ENCODE measurements at regions of chr22 and their contacts with region 1.

Region 1: GRCh38 chr22:46006379-46007002 is 29.5 kb upstream of the WNT7B start:
- DNase-seq: peak; percentile 60
- ATAC-seq: peak; percentile 74
- H3K4me3 ChIP-seq: peak overlapping the region; percentile 46 to 63
- H3K27ac ChIP-seq: peak overlapping the region; percentile 98
- H3K4me1 ChIP-seq: peaks cover 25 to 46% of the 10 kb centered on the region in 2 experiments
- H3K27me3 ChIP-seq: no peaks in the 10 kb centered on the region
- CTCF ChIP-seq: peak in 2 of 3 experiments; percentile 82 to 94; a peak in 4 of 6 replicates
- POLR2A ChIP-seq: no peak
- RAD21 ChIP-seq: no peak

Region 2: DNA sequence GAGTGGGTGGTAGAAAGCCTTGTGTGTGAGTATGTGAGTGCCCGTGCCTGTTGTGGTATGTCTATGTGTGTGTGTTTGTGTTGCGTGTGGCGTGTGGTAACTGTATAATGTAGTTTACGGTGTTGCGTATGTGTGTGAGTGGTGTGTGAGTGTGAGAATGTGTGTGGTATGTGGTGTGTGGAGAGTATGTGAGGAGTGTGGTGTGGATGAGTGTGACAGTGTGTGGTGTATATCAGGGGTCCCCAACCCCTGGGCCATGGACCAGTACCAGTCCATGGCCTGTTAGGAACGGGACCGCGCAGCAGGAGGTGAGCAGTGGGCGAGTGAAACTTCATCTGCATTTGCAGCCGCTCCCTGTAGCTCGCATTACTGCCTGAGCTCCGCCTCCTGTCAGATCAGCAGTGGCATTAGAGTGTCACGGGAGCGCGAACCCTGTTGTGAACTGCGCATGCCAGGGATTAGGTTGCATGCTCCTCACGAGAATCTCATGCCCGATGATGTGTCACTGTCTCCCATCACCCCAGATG is 716.0 kb before region 1 on chr22:
- CTCF ChIA-PET with region 1: no interaction called
- POLR2A ChIA-PET with region 1: no interaction called
- RAD21 ChIA-PET with region 1: no interaction called
- intact Hi-C with region 1: no loop called
- DNase-seq: peak; percentile 64
- ATAC-seq: peak; percentile 96
- H3K4me3 ChIP-seq: peak overlapping the region; percentile 8 to 29; a peak in 1 of 4 replicates
- H3K27ac ChIP-seq: peak overlapping the region; percentile 1; the same call in 1 of the 2 replicates
- H3K4me1 ChIP-seq: peaks cover 9 to 22% of the 10 kb centered on the region in 2 experiments; a peak in 3 of 4 replicates
- H3K27me3 ChIP-seq: no peaks in the 10 kb centered on the region
- CTCF ChIP-seq: no peak
- POLR2A ChIP-seq: no peak
- RAD21 ChIP-seq: no peak

Region 3: GRCh38 chr22:45804986-45805325 is 201.5 kb before region 1 on chr22:
- CTCF ChIA-PET with region 1: no interaction called
- POLR2A ChIA-PET with region 1: no interaction called
- RAD21 ChIA-PET with region 1: no interaction called
- intact Hi-C with region 1: no loop called
- DNase-seq: peak; percentile 82
- ATAC-seq: peak; percentile 95
- H3K4me3 ChIP-seq: peak overlapping the region in 1 of 2 experiments; percentile 24; a peak in 1 of 4 replicates
- H3K27ac ChIP-seq: peak overlapping the region; percentile 27; the same call in 1 of the 2 replicates
- H3K4me1 ChIP-seq: peaks cover 17 to 24% of the 10 kb centered on the region in 2 experiments
- H3K27me3 ChIP-seq: no peaks in the 10 kb centered on the region
- CTCF ChIP-seq: no peak
- POLR2A ChIP-seq: no peak
- RAD21 ChIP-seq: peak; percentile 34

Region 4: DNA sequence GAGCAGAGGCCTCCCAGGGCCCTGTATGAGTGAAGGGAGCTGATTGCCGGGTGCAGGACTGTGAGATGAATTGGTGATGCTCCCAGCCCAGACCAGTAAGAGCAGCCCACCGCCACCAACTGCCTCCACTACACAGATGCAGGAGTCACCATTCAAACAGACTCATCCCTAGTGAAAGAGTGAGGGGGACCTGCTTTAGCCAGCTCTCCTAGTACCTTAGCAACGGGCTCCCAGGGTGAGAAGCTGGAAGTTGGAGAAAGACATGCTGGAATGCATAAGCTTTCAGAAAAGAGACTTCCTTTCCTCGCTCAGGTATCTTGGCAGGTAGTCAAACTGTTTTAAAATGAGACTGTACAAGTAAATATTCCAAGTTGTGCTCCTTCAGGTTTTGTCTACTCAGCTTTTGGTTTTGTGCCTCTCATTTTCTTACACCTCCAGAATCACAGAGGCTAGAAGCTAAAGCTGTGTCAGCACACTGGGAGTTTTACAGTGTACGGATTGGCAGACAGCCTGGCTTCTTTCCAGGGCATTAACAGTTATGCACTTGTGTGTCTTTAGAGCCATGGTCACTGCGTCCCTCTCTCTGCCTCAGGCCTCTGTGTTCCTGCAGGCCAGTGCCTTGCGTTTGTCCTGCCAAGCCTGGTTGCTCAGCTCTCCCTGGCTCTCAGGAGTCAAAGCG is 188.6 kb before region 1 on chr22:
- CTCF ChIA-PET with region 1: no interaction called
- POLR2A ChIA-PET with region 1: no interaction called
- RAD21 ChIA-PET with region 1: no interaction called
- intact Hi-C with region 1: no loop called
- DNase-seq: no peak
- ATAC-seq: no peak
- H3K4me3 ChIP-seq: no peak overlapping the region
- H3K27ac ChIP-seq: no peak overlapping the region
- H3K4me1 ChIP-seq: no peaks in the 10 kb centered on the region
- H3K27me3 ChIP-seq: no peaks in the 10 kb centered on the region
- CTCF ChIP-seq: no peak
- POLR2A ChIP-seq: no peak
- RAD21 ChIP-seq: no peak

Region 5: GRCh38 chr22:46019351-46019750 is 12.9 kb after region 1 on chr22:
- CTCF ChIA-PET with region 1: interaction called, 22 read pairs
- POLR2A ChIA-PET with region 1: no interaction called
- RAD21 ChIA-PET with region 1: no interaction called
- intact Hi-C with region 1: no loop called
- DNase-seq: no peak
- ATAC-seq: no peak
- H3K4me3 ChIP-seq: no peak overlapping the region
- H3K27ac ChIP-seq: no peak overlapping the region
- H3K4me1 ChIP-seq: peaks cover 17 to 27% of the 10 kb centered on the region in 2 experiments
- H3K27me3 ChIP-seq: no peaks in the 10 kb centered on the region
- CTCF ChIP-seq: no peak
- POLR2A ChIP-seq: no peak
- RAD21 ChIP-seq: no peak

Region 6: DNA sequence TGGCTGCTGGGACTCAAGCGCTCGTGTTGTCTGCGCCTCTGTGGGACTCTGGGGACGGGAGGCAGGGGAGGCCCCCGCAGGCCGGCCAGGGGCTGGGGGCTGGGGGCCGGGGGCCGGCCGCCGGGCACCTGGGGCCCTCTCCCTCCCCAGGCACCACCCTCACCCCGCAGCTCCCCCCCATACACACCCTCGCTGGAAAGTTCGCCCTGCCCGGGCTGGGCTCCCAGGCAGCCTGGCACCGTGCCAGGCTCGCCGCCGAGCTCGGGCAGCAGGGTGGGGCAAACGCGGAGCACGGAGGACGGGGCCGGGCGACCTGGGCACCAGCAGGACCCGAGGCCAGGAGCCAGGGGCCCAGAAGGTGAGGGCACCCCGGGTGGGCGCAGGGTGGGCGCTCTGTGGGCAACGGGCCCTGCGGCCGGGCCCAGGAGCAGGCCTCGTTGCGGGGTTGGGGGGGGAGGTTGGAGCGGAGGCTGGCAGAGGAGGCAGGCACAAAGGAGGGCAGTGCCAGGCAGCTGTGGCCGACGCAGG is 47.1 kb after region 1 on chr22:
- CTCF ChIA-PET with region 1: interaction called, 10 read pairs
- POLR2A ChIA-PET with region 1: interaction called, 4 read pairs
- RAD21 ChIA-PET with region 1: interaction called in 1 of 2 experiments, 3 read pairs
- intact Hi-C with region 1: no loop called
- DNase-seq: no peak
- ATAC-seq: peak; percentile 72
- H3K4me3 ChIP-seq: peak overlapping the region; percentile 70 to 78
- H3K27ac ChIP-seq: peak overlapping the region; percentile 85
- H3K4me1 ChIP-seq: peaks cover 19 to 27% of the 10 kb centered on the region in 2 experiments
- H3K27me3 ChIP-seq: no peaks in the 10 kb centered on the region
- CTCF ChIP-seq: no peak
- POLR2A ChIP-seq: peak; percentile 8
- RAD21 ChIP-seq: no peak

Region 7: DNA sequence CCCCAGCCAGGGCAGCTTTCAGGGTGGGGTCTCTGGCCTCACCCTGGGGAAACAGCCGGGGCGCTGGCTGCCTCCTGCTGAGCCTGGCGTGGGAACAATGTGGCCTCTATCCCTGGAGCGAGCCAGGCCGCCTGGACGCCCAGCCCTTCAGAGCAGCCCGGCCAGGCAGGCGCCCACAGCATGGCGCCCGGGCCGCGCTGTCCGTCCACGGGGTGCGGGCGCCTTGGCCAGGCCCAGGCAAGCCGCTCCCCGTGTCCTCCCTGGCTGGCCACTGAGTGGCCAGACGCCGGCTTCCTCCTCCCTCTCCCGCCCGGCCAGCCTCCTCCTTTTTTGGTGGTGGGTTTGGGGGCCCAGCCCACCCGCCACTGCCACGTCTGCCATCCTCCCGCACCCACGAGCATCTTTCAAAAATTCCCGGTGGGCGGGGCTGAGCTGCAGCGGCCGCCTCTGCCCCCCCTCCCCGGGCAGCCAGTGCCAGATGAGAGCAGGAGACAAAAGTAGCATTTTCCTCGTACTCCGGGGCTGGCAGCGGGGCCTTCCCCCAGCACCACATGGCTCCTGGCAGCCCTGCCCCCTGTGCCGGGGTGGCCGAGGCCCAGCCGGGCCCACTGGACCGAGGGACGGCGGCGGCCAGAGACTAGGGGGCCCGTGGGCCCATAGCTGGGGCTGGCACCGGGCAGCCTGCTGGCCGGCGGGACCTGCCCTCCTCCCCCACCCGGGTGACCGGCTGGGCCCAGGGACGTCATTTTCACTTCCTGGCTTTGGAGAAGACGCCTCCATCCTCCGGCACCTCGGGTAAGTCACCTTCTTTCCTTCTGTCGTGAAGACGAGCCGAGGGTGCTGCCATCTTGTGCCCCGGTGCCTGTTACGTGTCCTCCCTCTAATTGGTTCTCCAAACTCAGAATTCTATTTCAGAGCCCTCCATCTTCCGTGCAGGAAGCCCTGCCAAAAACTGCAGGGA is 73.7 kb after region 1 on chr22:
- CTCF ChIA-PET with region 1: interaction called, 17 read pairs
- POLR2A ChIA-PET with region 1: interaction called, 7 read pairs
- RAD21 ChIA-PET with region 1: interaction called in 1 of 2 experiments, 3 read pairs
- intact Hi-C with region 1: no loop called
- DNase-seq: no peak
- ATAC-seq: peak; percentile 31
- H3K4me3 ChIP-seq: peak overlapping the region; percentile 60 to 64
- H3K27ac ChIP-seq: peak overlapping the region; percentile 100
- H3K4me1 ChIP-seq: peaks cover 67 to 89% of the 10 kb centered on the region in 2 experiments
- H3K27me3 ChIP-seq: no peaks in the 10 kb centered on the region
- CTCF ChIP-seq: no peak
- POLR2A ChIP-seq: no peak
- RAD21 ChIP-seq: no peak

Region 8: DNA sequence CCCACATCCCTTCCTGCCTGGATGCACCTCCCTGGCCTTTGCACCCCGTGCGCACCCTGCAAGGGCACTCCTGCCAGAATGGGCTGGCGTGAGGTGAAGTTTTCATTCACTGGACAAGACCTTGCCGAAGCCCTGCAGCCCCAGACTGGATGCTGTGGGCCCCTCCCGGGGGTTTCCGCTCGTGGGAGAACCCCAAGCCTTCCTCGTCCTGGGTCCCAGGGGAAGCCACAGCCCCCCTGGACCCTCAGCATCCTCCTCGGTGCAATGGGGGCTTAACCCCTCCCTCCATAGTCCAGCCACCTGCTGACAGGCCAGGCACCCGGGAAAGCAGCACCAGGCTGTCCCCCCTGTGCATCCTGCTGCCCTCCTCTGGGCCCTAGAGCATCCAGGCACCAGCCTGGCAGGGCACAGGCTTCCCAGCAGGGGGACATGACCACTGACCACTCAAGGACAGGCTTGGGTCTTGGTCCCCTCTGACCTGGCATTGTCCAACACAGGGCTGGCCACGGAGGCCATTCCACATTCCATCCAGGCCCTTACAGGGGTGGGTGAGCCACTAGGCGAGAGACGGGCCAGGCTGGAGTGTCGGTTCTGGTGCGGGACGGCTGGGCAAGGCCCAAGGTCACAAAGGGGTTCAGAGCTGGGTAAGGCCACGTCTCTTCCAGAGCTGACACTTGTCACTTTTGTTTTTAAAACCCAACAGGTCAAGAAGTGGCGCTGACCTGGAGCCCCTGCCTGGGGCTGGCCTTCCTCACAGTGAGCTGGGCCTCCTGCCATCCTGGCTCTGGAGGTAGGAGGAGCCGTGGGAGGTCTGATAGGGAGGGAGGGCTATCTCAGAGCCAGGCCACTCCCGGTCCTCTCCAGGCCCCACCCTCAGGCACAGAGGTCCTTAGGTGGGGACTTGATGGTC is 102.3 kb after region 1 on chr22:
- CTCF ChIA-PET with region 1: interaction called, 151 read pairs
- POLR2A ChIA-PET with region 1: interaction called, 3 read pairs
- RAD21 ChIA-PET with region 1: no interaction called
- intact Hi-C with region 1: no loop called
- DNase-seq: no peak
- ATAC-seq: peak; percentile 71
- H3K4me3 ChIP-seq: no peak overlapping the region
- H3K27ac ChIP-seq: peak overlapping the region; percentile 52
- H3K4me1 ChIP-seq: peaks cover 8 to 57% of the 10 kb centered on the region in 2 experiments; a peak in 3 of 4 replicates
- H3K27me3 ChIP-seq: no peaks in the 10 kb centered on the region
- CTCF ChIP-seq: 0 out of 6 replicates have a peak, but pooled peaks of 1 of the 3 experiments have one; percentile 17
- POLR2A ChIP-seq: no peak
- RAD21 ChIP-seq: no peak

Measured in HCT116 (cell line).